ENCODE measurements at regions of chr13 and their contacts with region 1.

Region 1: DNA sequence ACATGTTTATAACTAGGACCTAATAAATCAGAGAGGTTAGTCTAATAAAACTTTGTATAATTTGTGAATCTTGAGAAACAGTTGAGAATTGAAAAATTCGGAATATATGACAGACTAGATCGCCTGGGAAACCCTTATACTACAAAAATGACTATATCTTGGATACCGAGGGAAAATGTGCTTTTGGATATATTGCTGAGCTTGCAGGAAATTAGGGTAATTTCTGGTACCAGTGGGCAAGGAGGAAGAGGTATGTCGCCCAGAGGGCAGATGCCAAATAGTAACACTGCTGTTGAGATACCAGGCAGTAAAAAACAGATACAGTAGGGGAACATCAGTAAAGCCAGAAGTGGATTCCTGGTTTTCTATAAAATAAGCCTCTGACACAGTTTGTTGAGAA is 17.3 kb downstream of the MPHOSPH8 start:
- DNase-seq: no peak
- H3K4me3 ChIP-seq: no peak overlapping the region
- H3K27ac ChIP-seq: no peak overlapping the region
- H3K4me1 ChIP-seq: peaks cover 0 to 4% (median 0%) of the 10 kb centered on the region in 4 donors
- H3K27me3 ChIP-seq: no peaks in the 10 kb centered on the region
- CTCF ChIP-seq: no peak
- EP300 ChIP-seq: no peak
- POLR2A ChIP-seq: no peak

Region 2: DNA sequence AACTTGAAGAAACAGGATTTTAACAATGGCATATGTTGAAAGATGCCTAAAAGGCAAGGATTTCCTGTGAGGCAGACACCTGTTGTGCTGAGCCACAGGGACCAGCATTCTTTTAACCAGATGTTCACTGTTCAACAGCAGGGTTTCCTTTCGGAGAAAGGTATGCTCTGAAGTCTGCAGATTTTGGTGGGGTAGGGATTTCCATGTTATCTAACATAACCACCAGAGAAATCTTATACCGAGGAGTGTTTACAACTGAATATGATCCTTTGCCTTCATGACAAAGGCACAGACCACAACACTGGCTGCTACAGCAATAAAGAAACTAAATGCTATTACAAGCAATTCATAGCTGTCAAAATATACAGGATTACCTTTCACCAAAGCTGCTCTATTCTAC is 30.8 kb after region 1 on chr13:
- in situ Hi-C with region 1: no loop called
- intact Hi-C with region 1: loop called (anchors 1 kb)
- DNase-seq: no peak
- H3K4me3 ChIP-seq: no peak overlapping the region
- H3K27ac ChIP-seq: no peak overlapping the region
- H3K4me1 ChIP-seq: peaks cover 0 to 16% (median 7%) of the 10 kb centered on the region in 4 donors
- H3K27me3 ChIP-seq: no peaks in the 10 kb centered on the region
- CTCF ChIP-seq: no peak
- EP300 ChIP-seq: no peak
- POLR2A ChIP-seq: no peak